Naive thymus-derived CD4-positive, alpha-beta T cell (primary cell): ENCODE measurements at regions of chr19 and their contacts with region 1.

Region 1: DNA sequence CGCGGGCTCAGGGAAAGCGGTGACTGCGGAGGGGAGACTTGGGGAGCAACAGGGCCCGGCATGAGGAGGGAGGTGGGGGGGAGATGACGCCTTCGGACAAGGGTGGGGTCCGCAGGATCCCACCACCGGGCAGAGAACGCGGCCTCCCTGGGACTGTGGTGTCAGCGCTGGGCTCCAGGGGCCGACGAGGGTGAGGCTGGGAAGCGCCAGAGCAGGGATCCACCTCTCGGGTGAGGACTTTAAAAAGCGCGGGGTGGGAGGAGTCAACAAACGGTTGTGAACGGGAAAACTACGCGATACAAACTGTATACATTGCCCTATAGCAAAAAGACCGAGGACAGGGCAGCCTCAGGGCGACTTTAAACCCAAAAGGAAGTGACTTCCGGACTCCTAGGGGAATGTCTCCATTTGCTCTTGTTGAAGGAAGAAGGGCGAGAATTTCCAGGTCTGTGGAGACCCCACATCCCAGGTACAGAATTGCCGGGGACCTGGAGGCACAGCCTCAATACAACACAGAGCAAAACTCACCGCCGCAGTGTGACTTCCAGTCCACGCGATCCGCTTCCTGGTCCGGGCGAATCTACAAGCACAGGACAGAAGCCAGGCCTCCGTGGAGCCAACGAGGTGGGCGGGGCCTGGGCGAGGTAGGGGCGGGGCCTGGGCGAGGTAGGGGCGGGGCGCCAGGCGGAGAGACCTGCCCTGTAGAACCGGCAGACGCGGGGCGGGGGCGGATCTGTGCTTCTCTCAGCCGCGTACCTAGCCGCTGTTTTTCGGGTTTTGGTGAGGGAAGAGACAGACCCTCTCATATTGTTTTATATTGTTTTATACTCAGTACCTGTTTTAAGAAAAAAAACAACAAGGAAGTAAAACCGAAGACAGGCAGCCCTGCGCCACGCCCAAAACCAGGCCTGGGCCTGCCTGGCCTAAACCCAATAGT is at the start of gene ZNF888:
- DNase-seq: peak; percentile 52 to 89 (median 78)
- ATAC-seq: peak; percentile 100
- H3K4me3 ChIP-seq: peak within 1 kb of the TSS; percentile 87
- H3K4me3 Mint-ChIP-seq: peak within 1 kb of the TSS; percentile 80 to 94 (median 92)
- H3K27ac ChIP-seq: peak within 1 kb of the TSS; percentile 77
- H3K27ac Mint-ChIP-seq: peak within 1 kb of the TSS; percentile 23 to 93 (median 91)
- H3K4me1 ChIP-seq: no peaks in the 10 kb centered on the region
- H3K4me1 Mint-ChIP-seq: peaks cover 11 to 37% (median 24%) of the 10 kb centered on the region in 7 donors
- H3K27me3 ChIP-seq: no peaks in the 10 kb centered on the region
- H3K27me3 Mint-ChIP-seq: peaks cover 0 to 11% (median 6%) of the 10 kb centered on the region in 5 donors
- total RNA-seq, gene ZNF888: 2.1 to 7.2 (median 6.0) TPM

Region 2: GRCh38 chr19:52590728-52591127 is 332.4 kb before region 1 on chr19:
- CTCF ChIA-PET with region 1: no interaction called
- POLR2A ChIA-PET with region 1: no interaction called
- intact Hi-C with region 1: no loop called
- DNase-seq: no peak
- ATAC-seq: no peak
- H3K4me3 ChIP-seq: no peak overlapping the region
- H3K4me3 Mint-ChIP-seq: no peak overlapping the region
- H3K27ac ChIP-seq: no peak overlapping the region
- H3K27ac Mint-ChIP-seq: no peak overlapping the region
- H3K4me1 ChIP-seq: no peaks in the 10 kb centered on the region
- H3K4me1 Mint-ChIP-seq: no peaks in the 10 kb centered on the region
- H3K27me3 ChIP-seq: no peaks in the 10 kb centered on the region
- H3K27me3 Mint-ChIP-seq: no peaks in the 10 kb centered on the region

Region 3: DNA sequence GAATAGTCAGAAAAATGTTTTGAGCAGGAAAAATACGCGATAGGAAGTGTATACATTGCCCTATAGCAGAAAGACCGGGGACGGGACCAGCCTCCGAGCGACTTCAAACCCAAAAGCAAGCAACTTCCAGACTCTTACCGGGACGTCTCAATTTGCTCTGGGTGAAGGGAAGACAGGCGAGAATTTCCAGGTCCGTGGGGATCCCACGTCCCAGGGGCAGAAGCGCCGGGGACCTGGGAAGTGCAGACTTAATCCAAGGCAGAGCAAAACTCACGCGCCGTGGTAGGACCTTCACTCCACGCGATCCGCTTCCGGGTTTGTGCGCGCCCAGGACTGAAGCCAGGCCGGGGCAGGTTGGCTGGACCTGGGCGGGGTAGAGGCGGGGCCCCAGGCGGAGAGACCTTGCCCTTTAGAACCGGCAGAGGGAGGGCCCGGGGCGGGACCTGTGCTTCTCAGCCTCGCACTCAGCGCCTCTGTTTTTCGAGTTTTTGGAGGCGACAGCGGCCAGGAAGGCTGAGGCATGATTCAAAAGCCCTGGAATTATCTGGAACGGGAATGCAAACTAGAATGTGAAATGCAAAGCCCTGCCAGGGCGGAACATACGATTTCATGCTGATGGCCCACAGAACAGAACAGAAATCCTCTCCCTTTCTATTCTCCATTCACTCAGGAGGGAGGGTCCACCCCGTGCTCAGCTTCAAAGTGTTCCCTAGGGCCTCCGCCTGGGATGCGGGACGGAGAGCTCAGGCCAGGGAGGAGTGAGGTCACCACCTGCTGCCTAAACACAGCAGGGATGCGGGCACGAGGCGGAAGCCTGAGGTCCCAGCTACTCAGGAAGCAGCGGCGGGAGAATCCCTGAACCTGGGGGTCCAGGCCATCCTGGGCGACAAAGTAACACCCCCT is 136.4 kb before region 1 on chr19 and contains the start of gene ZNF600:
- CTCF ChIA-PET with region 1: no interaction called
- POLR2A ChIA-PET with region 1: no interaction called
- intact Hi-C with region 1: loop called in 1 of 2 experiments (anchors 5 kb)
- DNase-seq: peak; percentile 33 to 65 (median 45)
- ATAC-seq: peak; percentile 98
- H3K4me3 ChIP-seq: peak within 1 kb of the TSS; percentile 60
- H3K4me3 Mint-ChIP-seq: peak within 1 kb of the TSS; percentile 83 to 96 (median 92)
- H3K27ac ChIP-seq: peak within 1 kb of the TSS; percentile 70
- H3K27ac Mint-ChIP-seq: peak within 1 kb of the TSS; percentile 28 to 97 (median 81)
- H3K4me1 ChIP-seq: peaks cover 0 to 3% of the 10 kb centered on the region in 2 donors
- H3K4me1 Mint-ChIP-seq: peaks cover 19 to 35% (median 32%) of the 10 kb centered on the region in 7 donors
- H3K27me3 ChIP-seq: no peaks in the 10 kb centered on the region
- H3K27me3 Mint-ChIP-seq: no peaks in the 10 kb centered on the region
- total RNA-seq, gene ZNF600: 6.7 to 30.0 (median 19.8) TPM

Region 4: GRCh38 chr19:52942386-52943133 is 19.5 kb after region 1 on chr19:
- CTCF ChIA-PET with region 1: no interaction called
- POLR2A ChIA-PET with region 1: interaction called, 4 read pairs
- intact Hi-C with region 1: loop called (anchors 2 kb)
- DNase-seq: peak; percentile 88 to 99 (median 95)
- ATAC-seq: peak; percentile 100
- H3K4me3 ChIP-seq: peak overlapping the region; percentile 98
- H3K4me3 Mint-ChIP-seq: peak overlapping the region; percentile 87 to 95 (median 92)
- H3K27ac ChIP-seq: peak overlapping the region; percentile 85
- H3K27ac Mint-ChIP-seq: peak overlapping the region; percentile 33 to 94 (median 89)
- H3K4me1 ChIP-seq: peaks cover 0 to 4% of the 10 kb centered on the region in 2 donors
- H3K4me1 Mint-ChIP-seq: peaks cover 12 to 27% (median 16%) of the 10 kb centered on the region in 7 donors
- H3K27me3 ChIP-seq: no peaks in the 10 kb centered on the region
- H3K27me3 Mint-ChIP-seq: no peaks in the 10 kb centered on the region

Region 5: DNA sequence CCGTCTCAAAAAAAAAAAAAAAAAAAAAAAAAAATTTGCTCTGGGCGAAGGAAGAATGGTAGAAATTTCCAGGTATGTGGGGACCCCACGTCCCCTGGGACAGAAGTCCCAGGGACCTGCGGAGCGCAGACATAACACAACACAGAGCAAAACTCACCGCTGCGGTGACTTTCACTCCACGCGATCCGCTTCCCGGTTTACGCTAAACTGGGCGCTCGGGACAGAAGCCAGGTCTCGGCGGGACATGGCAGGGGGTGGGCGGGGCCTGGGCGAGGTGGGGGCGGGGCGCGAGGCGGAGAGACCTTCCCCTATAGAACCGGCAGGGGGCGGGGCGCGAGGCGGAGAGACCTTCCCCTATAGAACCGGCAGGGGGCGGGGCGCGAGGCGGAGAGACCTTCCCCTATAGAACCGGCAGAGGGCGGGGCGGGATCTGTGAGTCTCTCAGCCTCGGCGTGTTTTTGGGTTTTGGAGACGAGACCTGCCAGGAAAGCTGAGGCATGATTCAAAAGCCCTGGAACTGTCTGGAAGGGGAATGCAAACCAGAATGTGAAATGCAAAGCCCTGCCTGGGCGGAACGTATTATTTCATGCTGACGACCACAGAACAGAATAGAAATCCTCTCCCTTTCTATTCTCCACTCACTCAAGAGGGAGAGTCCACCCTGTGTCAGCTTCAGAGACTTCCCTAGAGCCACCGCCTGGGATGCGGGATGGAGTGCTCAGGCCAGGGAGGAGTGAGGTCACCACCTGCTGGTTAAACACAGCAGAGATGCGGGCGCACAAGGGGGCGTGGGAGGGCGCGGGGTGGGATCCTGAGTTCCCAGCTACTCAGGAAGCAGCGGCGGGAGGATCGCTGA is 70.4 kb after region 1 on chr19:
- CTCF ChIA-PET with region 1: no interaction called
- POLR2A ChIA-PET with region 1: no interaction called
- intact Hi-C with region 1: loop called in 1 of 2 experiments (anchors 2 kb)
- DNase-seq: peak; percentile 49 to 85 (median 81)
- ATAC-seq: peak; percentile 100
- H3K4me3 ChIP-seq: peak overlapping the region; percentile 60
- H3K4me3 Mint-ChIP-seq: peak overlapping the region; percentile 56 to 92 (median 86)
- H3K27ac ChIP-seq: no peak overlapping the region
- H3K27ac Mint-ChIP-seq: peak overlapping the region in 5 of 9 donors; percentile 25 to 83 (median 54)
- H3K4me1 ChIP-seq: peaks cover 0 to 6% of the 10 kb centered on the region in 2 donors
- H3K4me1 Mint-ChIP-seq: peaks cover 8 to 26% (median 14%) of the 10 kb centered on the region in 7 donors
- H3K27me3 ChIP-seq: no peaks in the 10 kb centered on the region
- H3K27me3 Mint-ChIP-seq: peaks cover 0 to 23% (median 14%) of the 10 kb centered on the region in 5 donors

Region 6: DNA sequence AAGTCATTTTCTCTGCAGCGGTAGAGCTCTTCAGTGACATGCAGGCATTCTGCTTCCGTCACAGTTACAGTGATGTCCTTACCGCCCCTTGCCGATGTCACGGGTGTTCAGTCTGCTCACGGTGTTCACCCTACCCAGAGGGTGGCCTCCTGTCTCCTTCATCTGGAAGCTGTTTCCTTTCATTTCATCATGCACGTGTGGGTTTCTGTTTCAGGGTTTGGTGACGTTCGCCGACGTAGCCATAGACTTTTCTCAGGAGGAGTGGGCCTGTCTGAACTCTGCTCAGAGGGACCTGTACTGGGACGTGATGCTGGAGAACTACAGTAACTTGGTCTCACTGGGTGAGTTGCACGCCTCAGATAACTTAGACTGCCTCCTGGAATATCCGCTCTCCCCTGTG is 648.3 kb after region 1 on chr19:
- CTCF ChIA-PET with region 1: no interaction called
- POLR2A ChIA-PET with region 1: no interaction called
- intact Hi-C with region 1: no loop called
- DNase-seq: no peak
- ATAC-seq: no peak
- H3K4me3 ChIP-seq: no peak overlapping the region
- H3K4me3 Mint-ChIP-seq: peak overlapping the region in 2 of 10 donors; percentile 8 to 42
- H3K27ac ChIP-seq: no peak overlapping the region
- H3K27ac Mint-ChIP-seq: peak overlapping the region in 3 of 9 donors; percentile 51 to 74 (median 70)
- H3K4me1 ChIP-seq: no peaks in the 10 kb centered on the region
- H3K4me1 Mint-ChIP-seq: peaks cover 0 to 12% (median 5%) of the 10 kb centered on the region in 7 donors
- H3K27me3 ChIP-seq: no peaks in the 10 kb centered on the region
- H3K27me3 Mint-ChIP-seq: no peaks in the 10 kb centered on the region